ENCODE measurements at regions of chr1 and their contacts with region 1.

Region 1: GRCh38 chr1:231410036-231410612 is 12.0 kb downstream of the EGLN1 start:
- DNase-seq: no peak

Region 2: DNA sequence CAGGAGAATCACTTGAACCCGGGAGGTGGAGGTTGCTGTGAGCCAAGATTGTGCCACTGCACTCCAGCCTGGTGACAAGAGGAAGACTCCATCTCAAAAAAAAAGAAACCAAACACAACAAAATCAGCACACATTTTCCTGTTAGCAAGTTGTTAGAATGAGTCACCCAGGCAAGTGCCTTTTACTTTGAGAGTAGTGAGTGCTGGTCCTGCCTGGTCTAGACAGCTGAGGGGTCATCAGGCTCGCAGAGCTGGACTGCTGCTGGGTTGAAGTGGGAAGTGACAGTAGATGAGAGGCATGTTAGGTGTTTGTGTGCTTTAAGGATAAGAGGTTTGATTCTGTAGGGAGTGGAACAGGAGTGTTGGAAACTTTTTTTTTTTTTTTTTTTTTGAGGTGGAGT is 137.2 kb before region 1 on chr1:
- intact Hi-C with region 1: no loop called
- DNase-seq: no peak

Region 3: GRCh38 chr1:231376875-231377549 is 33.1 kb before region 1 on chr1:
- intact Hi-C with region 1: loop called (anchors 5 kb)
- DNase-seq: no peak

Measured in posterior cingulate gyrus (tissue), 11 donors.